Common myeloid progenitor, CD34-positive (primary cell): ENCODE measurements at regions of chr3 and their contacts with region 1.

Region 1: GRCh38 chr3:159922861-159923312 is 65.7 kb upstream of the IL12A start:
- DNase-seq: peak in 1 of 3 donors; percentile 52
- H3K4me3 ChIP-seq: no peak overlapping the region
- H3K27ac ChIP-seq: no peak overlapping the region
- H3K4me1 ChIP-seq: peaks cover 0 to 17% (median 8%) of the 10 kb centered on the region in 4 experiments
- H3K27me3 ChIP-seq: no peaks in the 10 kb centered on the region

Region 2: GRCh38 chr3:159872374-159873109 is 50.3 kb before region 1 on chr3:
- CTCF ChIA-PET with region 1: no interaction called
- POLR2A ChIA-PET with region 1: no interaction called
- DNase-seq: peak; percentile 48 to 81 (median 75)
- H3K4me3 ChIP-seq: no peak overlapping the region
- H3K27ac ChIP-seq: no peak overlapping the region
- H3K4me1 ChIP-seq: peaks cover 0 to 30% (median 6%) of the 10 kb centered on the region in 4 experiments
- H3K27me3 ChIP-seq: no peaks in the 10 kb centered on the region

Region 3: DNA sequence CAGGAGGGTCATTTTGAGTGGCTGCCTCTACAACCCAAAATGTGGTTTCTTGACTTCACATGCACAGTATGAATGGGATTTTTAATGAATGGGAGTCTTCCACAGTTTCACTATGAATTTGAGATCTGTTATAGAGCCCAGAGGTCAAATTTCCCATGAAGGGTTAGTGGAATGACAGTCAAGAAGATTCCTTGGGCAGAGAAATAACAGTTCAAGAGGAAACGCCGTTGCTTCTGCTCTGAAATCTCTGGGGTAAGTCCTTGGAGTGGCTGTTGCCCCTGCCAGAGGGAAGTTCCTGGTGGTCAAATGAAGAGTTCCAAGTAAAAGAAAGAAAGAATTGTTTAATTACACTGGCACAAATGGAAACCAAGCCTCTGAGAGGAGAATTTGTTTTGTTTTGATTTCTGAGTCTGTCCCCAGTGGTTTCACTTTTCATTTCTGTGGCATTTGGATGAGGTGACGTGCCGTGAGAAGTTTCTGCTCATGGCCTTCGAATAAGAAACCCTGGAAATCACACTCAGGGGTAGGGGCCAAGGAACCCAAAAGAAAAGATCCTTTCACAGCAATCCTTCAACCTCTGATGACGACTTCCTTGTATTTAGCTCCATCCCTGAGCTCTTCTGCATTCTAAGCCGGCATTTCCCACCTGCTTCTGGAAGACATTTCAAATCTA is 11.8 kb before region 1 on chr3:
- CTCF ChIA-PET with region 1: interaction called, 23 read pairs
- POLR2A ChIA-PET with region 1: no interaction called
- DNase-seq: peak; percentile 45 to 78 (median 75)
- H3K4me3 ChIP-seq: peak overlapping the region in 4 of 7 experiments; percentile 42 to 74 (median 55)
- H3K27ac ChIP-seq: peak overlapping the region in 1 of 2 experiments; percentile 9
- H3K4me1 ChIP-seq: peaks cover 0 to 24% (median 21%) of the 10 kb centered on the region in 4 experiments
- H3K27me3 ChIP-seq: no peaks in the 10 kb centered on the region